ENCODE measurements at regions of chr11 and their contacts with region 1.

Region 1: GRCh38 chr11:7353100-7353499 is 101.4 kb downstream of the SYT9 start:
- DNase-seq: no peak
- ATAC-seq: no peak
- H3K4me3 ChIP-seq: no peak overlapping the region
- H3K27ac ChIP-seq: no peak overlapping the region
- H3K4me1 ChIP-seq: no peaks in the 10 kb centered on the region
- H3K27me3 ChIP-seq: no peaks in the 10 kb centered on the region
- CTCF ChIP-seq: peak; percentile 19

Region 2: GRCh38 chr11:7703740-7704139 is 350.6 kb after region 1 on chr11:
- intact Hi-C with region 1: loop called in 1 of 2 experiments (anchors 5 kb)
- DNase-seq: no peak
- ATAC-seq: no peak
- H3K4me3 ChIP-seq: no peak overlapping the region
- H3K27ac ChIP-seq: no peak overlapping the region
- H3K4me1 ChIP-seq: no peaks in the 10 kb centered on the region
- H3K27me3 ChIP-seq: peaks cover 0 to 3% (median 0%) of the 10 kb centered on the region in 3 donors
- CTCF ChIP-seq: no peak